Activated B cell treated with CpG ODN at 0.5 μM for 24 hours (primary cell): ENCODE measurements at regions of chr14 and their contacts with region 1.

Region 1: DNA sequence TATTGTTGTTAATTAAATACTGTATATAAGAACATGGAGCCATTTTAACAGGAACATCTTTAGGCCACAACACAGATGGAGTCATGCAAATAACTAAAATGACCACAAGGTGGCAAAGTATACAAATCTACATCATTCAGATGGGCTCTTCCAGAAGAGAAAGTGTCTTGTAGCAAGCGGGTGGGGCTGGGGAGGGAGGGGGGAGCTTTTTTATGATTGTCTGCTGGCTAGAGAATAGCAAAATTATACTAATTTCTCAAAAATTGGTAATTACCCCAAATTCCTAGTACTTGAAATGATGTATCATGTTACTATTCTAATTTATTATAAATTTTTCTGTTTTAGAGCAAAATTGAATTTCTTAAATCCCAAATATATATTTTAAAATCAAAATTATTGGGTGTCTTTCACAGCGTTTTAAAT is 378.7 kb downstream of the PRKD1 start:
- DNase-seq: no peak
- ATAC-seq: peak; percentile 78
- H3K4me3 Mint-ChIP-seq: no peak overlapping the region
- H3K27ac Mint-ChIP-seq: no peak overlapping the region
- H3K4me1 Mint-ChIP-seq: no peaks in the 10 kb centered on the region
- H3K27me3 Mint-ChIP-seq: no peaks in the 10 kb centered on the region
- CTCF ChIP-seq: no peak

Region 2: DNA sequence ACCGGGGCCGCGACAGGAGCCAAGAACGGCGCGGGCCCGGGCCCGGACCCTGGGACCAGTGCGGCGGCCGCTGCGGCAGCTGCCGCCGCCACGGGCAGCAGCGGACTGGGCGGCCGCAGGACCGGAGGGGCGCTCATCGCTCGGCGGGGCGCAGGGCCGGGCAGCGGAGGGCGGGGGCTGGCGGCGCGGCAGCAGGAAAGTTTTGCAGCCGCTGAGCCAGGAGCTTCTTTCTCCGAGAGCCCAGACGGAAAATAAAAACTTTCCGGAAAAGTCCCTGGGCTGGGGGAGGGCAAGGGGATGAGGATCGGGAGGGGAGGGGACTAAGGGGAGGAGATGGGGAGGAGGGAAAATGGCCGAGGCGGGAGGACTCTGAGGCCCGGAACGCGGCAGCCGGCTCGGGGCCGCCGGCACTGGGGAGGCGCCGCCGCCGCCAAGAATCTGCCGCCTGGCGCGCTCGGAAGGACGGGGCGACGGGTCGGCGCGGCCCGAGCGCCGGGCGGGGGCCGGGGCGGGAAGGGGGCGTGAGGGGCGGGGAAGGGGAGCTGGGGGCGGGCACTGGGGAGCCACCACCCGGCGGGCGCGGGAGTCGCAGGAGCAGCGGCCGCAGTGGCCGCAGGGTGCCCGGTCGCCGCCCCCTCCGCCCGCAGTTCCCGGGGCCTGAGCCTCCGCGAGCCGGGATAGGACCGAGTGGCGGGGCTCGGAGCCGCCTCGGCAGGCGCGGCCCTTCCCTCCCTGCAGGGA is 378.6 kb after region 1 on chr14 and contains the start of gene PRKD1:
- CTCF ChIA-PET with region 1: interaction called, 3 read pairs
- POLR2A ChIA-PET with region 1: interaction called, 3 read pairs
- intact Hi-C with region 1: loop called (anchors 1 kb)
- DNase-seq: peak; percentile 32
- ATAC-seq: peak; percentile 68
- H3K4me3 Mint-ChIP-seq: peak within 1 kb of the TSS; percentile 82
- H3K27ac Mint-ChIP-seq: peak within 1 kb of the TSS; percentile 15
- H3K4me1 Mint-ChIP-seq: peaks cover 8% of the 10 kb centered on the region
- H3K27me3 Mint-ChIP-seq: peaks cover 18% of the 10 kb centered on the region
- CTCF ChIP-seq: no peak
- total RNA-seq, gene PRKD1: 5.1 and 6.7 TPM in 2 replicates

Region 3: GRCh38 chr14:30005114-30005808 is 456.3 kb after region 1 on chr14:
- CTCF ChIA-PET with region 1: interaction called, 16 read pairs
- POLR2A ChIA-PET with region 1: no interaction called
- intact Hi-C with region 1: loop called (anchors 1 kb)
- DNase-seq: no peak
- ATAC-seq: peak; percentile 61
- H3K4me3 Mint-ChIP-seq: no peak overlapping the region
- H3K27ac Mint-ChIP-seq: no peak overlapping the region
- H3K4me1 Mint-ChIP-seq: no peaks in the 10 kb centered on the region
- H3K27me3 Mint-ChIP-seq: no peaks in the 10 kb centered on the region
- CTCF ChIP-seq: peak; percentile 46

Region 4: GRCh38 chr14:30214461-30215090 is 665.6 kb after region 1 on chr14:
- CTCF ChIA-PET with region 1: interaction called, 5 read pairs
- POLR2A ChIA-PET with region 1: no interaction called
- intact Hi-C with region 1: loop called (anchors 1 kb)
- DNase-seq: no peak
- ATAC-seq: no peak
- H3K4me3 Mint-ChIP-seq: no peak overlapping the region
- H3K27ac Mint-ChIP-seq: no peak overlapping the region
- H3K4me1 Mint-ChIP-seq: no peaks in the 10 kb centered on the region
- H3K27me3 Mint-ChIP-seq: no peaks in the 10 kb centered on the region
- CTCF ChIP-seq: no peak

Region 5: GRCh38 chr14:30270200-30271161 is 721.5 kb after region 1 on chr14:
- CTCF ChIA-PET with region 1: interaction called, 4 read pairs
- POLR2A ChIA-PET with region 1: no interaction called
- intact Hi-C with region 1: loop called (anchors 1 kb)
- DNase-seq: peak; percentile 33
- ATAC-seq: peak; percentile 82
- H3K4me3 Mint-ChIP-seq: peak overlapping the region; percentile 24
- H3K27ac Mint-ChIP-seq: no peak overlapping the region
- H3K4me1 Mint-ChIP-seq: peaks cover 2% of the 10 kb centered on the region
- H3K27me3 Mint-ChIP-seq: peaks cover 6% of the 10 kb centered on the region
- CTCF ChIP-seq: no peak